PC-9 (cell line): ENCODE measurements at regions of chr11 and their contacts with region 1.

Region 1: GRCh38 chr11:110242746-110243145 is 53.7 kb downstream of the RDX start:
- DNase-seq: no peak
- H3K4me3 ChIP-seq: no peak overlapping the region
- H3K27ac ChIP-seq: no peak overlapping the region
- H3K4me1 ChIP-seq: no peaks in the 10 kb centered on the region
- H3K27me3 ChIP-seq: no peaks in the 10 kb centered on the region
- CTCF ChIP-seq: no peak

Region 2: DNA sequence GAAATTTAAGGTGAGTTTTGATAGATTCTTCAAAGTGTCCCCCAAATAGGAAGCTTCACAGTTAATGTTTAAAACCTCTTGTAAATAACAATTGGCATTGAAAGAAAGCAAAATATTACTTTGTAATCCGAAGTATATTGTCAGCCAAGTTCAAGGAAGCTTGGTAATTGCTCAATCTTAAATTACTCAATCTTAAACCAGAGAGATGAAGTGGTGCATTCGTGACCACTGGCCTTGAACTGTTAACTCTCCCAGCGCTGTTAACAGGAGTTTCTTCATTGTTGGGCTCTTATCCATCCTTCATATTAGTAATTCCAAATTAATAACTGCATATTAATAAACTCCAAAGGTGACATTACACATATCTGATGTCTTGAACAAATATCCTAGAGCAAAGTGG is 166.4 kb after region 1 on chr11:
- CTCF ChIA-PET with region 1: no interaction called
- POLR2A ChIA-PET with region 1: no interaction called
- intact Hi-C with region 1: no loop called
- DNase-seq: no peak
- H3K4me3 ChIP-seq: no peak overlapping the region
- H3K27ac ChIP-seq: no peak overlapping the region
- H3K4me1 ChIP-seq: peaks cover 19% of the 10 kb centered on the region
- H3K27me3 ChIP-seq: no peaks in the 10 kb centered on the region
- CTCF ChIP-seq: no peak

Region 3: DNA sequence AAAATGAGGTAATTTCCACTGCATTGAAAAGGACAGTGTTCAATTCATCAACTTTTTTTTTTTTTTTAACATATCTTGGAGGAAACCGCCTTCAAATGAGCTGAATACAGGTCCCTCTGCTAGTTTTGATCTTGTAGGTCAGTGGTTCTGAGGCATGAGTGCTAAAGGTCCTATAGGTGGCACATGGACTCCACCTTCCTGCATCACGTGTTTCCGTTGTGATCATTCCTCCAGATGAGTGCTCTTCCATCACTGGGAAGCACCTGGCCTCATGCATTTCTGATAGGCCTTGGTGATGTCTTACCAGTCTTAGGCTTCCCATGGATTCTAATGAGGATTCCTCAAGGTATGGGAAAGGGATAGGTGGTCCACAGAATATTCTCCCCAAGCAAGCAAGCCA is 224.8 kb after region 1 on chr11:
- CTCF ChIA-PET with region 1: no interaction called
- POLR2A ChIA-PET with region 1: interaction called, 13 read pairs
- intact Hi-C with region 1: no loop called
- DNase-seq: no peak
- H3K4me3 ChIP-seq: no peak overlapping the region
- H3K27ac ChIP-seq: no peak overlapping the region
- H3K4me1 ChIP-seq: no peaks in the 10 kb centered on the region; the same call in 1 of the 2 replicates
- H3K27me3 ChIP-seq: no peaks in the 10 kb centered on the region
- CTCF ChIP-seq: no peak